ENCODE measurements at regions of chr5 and their contacts with region 1.

Region 1: DNA sequence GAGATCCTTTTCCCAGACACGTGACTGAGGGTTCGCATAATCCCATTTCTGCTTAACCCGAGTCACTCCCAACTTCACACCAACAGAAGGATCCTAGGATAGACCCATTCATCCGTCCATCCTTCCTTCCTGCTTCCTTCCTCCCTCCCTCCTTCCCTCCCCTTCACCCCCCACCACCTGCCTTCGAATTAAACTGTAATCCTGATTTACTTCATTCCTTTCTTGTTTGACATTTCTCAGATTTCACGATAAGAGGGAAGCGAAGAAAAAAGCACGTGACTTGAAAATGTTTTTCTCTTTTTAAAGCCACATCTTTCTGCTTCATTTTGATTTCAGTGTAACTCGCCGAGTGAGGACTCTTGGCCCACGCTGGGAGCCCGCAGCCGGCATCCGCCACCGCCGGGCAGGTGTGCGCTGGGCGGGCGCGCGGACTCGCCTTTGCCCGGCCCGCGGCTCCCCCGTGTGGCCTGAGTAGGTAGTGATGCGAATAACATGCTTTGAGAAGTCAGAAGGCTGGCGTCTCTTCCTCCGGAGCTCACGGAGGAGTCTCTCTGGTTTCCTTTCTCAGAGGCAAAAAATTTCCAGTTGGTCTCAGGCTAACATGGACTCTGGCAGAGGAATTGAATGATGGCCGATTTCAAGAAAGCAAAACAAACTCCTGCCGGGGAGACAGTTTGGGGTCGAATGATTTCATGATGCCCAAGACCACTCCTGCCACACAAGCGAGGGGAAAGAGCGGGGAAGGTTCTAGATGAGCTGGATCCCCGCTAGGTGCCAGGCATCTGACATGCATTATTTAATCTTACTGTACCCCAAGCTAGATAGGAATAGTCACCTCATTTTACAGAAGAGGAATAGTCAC is 117.7 kb downstream of the SLC12A2 start:
- DNase-seq: peak; percentile 90

Region 2: DNA sequence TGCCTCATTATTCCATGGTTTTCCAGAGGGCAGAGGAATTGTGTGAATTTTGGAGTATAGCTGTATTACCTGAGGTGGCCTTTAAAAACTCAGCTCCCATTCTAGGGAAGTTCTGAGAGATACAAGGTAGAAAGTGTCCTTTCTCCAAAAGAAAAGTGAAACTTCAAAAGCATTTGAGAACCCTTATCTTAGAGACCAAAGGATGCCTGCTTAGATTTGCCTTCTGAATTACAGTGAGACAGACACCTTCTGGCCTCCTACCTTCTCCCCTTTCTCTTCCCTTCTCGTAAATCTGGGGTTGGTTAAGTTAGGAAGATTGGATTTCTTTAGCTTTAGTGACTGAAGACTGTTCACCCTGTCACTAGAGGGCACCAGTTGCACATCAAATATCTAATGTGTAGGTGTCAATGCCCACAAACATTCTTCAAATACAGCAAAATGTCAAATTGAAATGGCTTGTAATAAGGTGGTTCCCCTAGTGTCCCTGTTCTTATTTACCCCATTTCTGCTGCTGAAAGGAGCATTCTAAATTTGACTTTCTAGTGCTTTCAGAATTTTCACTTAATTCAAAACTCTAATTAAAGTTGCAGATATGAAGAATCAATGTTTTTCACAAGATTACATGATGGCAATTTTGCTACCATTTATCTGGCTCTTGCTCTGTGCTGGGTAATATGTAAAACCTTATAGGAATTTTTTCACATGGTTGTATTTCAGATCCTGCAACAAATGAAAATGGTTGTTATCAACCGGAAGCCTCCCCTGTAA is 637.1 kb before region 1 on chr5:
- intact Hi-C with region 1: loop called (anchors 1 kb)
- DNase-seq: no peak

Region 3: GRCh38 chr5:127757576-127757975 is 443.7 kb before region 1 on chr5:
- intact Hi-C with region 1: loop called (anchors 2 kb)
- DNase-seq: no peak

Region 4: DNA sequence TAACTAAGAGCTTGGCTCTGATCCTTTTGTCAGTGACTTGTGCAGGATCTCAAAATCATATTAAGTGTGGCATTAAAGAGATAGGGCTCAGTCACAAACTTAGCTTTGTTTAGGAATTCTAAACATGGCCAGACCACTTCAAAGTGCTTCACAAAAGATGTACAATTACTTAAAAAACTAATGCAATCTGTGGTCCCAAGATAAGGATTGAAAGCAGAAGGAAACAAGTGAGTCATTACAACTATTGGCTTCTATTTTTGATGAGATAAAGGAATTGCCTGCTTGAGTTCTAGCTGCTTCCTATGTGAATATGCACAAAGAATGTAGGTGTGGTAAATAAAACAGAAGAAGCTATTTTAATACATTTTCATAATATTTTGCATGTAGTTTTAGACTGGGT is 162.7 kb before region 1 on chr5:
- intact Hi-C with region 1: no loop called
- DNase-seq: no peak

Measured in cardiac septum (tissue), 1 donor.